ENCODE measurements at regions of chr9 and their contacts with region 1.

Region 1: DNA sequence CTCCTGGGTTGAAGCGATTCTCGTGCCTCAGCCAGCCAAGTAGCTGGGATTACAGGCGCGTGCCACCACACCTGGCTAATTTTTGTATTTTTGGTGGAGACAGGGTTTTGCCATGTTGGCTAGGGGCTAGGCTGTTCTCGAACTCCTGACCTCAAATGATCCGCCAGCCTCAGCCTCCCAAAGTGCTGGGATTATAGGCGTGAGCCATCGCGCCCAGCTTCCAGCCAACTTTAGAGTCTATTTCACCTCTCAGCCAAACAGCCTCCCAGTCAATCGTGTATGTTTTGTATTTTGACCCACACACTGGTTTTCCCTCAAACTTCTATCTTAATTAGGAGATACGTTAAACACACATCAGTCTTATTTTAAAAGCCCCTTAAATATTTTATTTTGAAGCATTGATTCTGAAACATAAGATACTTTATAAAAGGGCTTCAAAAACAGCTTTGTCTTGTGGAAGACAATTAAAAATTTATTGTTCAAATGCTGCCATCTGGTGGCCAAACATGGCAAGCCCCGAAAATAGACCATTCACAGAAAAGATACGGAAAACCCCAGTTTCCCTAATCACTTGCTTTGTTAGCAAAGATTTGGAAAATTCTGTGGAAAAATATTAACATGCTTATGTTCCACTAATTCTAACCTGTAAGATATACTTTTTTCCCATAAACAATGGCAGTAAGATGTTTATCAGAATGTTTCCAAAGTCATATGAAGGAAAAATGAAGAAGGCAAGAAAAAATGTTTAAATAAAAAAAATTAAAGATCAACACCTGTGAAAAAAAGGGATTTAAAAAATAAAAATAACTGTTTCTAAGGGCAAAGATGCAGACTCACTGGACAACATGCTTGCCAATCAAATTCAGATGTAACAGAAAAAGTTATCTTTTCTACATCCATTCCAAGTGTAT is 33.1 kb downstream of the APTX start:
- DNase-seq: peak; percentile 19
- H3K4me3 ChIP-seq: no peak overlapping the region
- H3K27ac ChIP-seq: no peak overlapping the region
- H3K4me1 ChIP-seq: no peaks in the 10 kb centered on the region
- H3K27me3 ChIP-seq: no peaks in the 10 kb centered on the region
- CTCF ChIP-seq: peak; percentile 77 to 79

Region 2: DNA sequence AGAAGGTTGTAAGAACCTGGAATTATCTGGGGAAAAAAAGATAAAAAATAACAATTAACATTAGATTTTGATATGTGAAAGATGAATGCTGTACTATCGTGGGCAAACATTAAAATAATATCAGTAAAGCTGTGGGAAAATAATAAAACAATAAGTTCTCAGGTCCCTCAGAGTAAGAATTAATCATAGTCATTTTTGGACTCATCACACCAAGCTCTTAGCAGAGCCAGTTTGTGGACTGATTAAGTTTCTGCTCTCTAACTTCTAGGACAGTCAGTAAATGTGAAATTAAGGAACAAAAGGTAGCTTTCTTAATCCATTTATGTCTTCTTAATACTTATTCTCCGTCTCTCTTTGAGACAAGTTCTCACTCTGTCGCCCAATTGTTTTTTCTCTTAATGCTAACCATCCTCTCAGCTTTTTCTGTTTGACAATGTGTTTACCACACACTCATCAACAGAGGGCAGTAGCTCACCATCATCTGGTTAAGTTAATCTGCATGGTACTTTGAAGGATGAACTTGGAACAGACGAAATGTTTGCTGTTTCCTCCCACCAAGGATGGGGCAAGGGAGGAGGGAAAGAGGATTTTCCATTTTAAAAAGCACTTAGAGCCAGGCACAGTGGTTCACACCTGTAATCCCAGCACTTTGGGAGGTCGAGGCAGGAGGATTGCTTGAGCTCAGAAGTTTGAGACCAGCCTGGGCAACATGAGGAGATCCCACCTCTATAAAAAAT is 589.2 kb before region 1 on chr9:
- CTCF ChIA-PET with region 1: no interaction called
- dilution Hi-C with region 1: loop called (anchors 25 kb)
- in situ Hi-C with region 1: loop called (anchors 10 to 25 kb)
- intact Hi-C with region 1: loop called (anchors 2 kb)
- DNase-seq: peak; percentile 68
- H3K4me3 ChIP-seq: no peak overlapping the region
- H3K27ac ChIP-seq: no peak overlapping the region
- H3K4me1 ChIP-seq: peaks cover 7% of the 10 kb centered on the region
- H3K27me3 ChIP-seq: no peaks in the 10 kb centered on the region
- CTCF ChIP-seq: peak; percentile 82 to 85

Region 3: DNA sequence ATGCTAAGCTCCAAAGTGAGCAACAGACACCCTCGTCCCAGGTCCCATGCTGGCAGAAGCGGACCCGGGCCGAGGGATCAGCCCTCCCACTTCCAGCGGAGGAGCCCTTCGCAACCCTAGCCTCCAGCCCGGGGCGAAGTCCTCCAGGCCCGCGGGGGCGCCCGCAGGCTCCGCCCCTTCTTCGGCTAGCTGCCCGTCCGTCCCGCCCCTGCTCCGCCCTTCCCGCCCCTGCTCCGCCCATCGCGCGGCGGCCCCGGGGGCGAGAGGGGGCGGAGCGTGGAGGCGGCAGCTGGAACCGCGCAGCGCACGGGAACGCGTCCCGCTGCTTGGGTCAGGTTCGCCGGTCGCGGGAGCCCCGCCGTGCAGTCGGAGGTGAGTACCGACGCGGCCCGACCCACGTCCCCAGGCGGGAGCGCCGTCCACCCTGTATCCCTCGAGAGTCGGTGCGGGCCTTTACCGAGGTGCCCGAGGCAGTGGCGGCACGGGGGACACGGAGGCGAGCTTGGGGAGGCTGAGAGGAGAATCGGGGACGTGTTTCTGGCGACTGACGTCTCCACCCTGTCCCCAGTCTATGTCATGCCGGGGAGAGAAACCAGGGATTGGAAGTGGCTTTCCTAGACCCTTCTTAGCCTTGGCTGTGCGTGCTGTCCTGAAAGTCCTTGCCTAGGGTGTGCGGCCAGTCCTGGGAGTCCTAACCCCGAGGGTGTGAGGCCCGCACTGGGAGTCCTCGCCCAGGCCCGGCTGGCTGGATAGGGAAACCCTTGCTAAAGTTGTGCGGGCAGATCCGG is 583.8 kb before region 1 on chr9 and contains the start of gene ACO1:
- CTCF ChIA-PET with region 1: no interaction called
- dilution Hi-C with region 1: loop called (anchors 25 kb)
- in situ Hi-C with region 1: loop called (anchors 10 to 25 kb)
- intact Hi-C with region 1: loop called (anchors 2 kb)
- DNase-seq: peak; percentile 83
- H3K4me3 ChIP-seq: peak within 1 kb of the TSS; percentile 79 to 98 (median 86)
- H3K27ac ChIP-seq: peak within 1 kb of the TSS; percentile 69
- H3K4me1 ChIP-seq: peaks cover 14% of the 10 kb centered on the region
- H3K27me3 ChIP-seq: no peaks in the 10 kb centered on the region
- CTCF ChIP-seq: no peak
- total RNA-seq, gene ACO1: 43.1 to 44.2 TPM

Region 4: DNA sequence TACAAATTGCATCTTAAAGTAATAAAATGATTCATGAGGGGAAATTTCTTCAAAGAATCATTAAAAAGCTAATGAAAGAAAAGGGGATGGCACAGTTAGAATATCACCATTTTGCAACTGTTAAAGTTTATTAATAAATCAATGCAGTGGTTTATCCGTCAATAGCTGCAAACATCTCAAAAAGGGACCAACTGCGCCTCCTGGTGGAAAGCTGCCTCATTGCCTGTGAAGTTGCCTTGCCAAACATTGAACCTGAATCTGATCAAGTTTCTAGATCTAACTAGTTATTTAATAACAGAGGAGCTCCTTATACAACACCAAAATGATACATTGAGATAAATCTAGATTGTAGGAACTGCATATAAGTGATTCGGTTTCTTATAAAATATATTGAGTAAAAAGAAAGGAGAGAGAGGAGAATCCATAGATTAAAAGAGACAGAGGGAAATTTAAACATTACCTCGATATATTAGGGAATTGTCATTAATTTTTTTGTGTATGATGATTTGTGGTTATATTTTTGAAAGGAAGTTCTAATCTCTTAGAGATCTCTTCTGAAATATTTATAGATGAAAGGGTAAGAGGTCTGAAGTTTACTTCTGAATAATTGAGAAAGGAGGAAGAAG is 388.5 kb before region 1 on chr9:
- CTCF ChIA-PET with region 1: interaction called, 4 read pairs
- dilution Hi-C with region 1: loop called (anchors 25 kb)
- in situ Hi-C with region 1: loop called in 1 of 2 experiments (anchors 10 kb)
- intact Hi-C with region 1: loop called (anchors 1 kb)
- DNase-seq: peak; percentile 25
- H3K4me3 ChIP-seq: no peak overlapping the region
- H3K27ac ChIP-seq: no peak overlapping the region
- H3K4me1 ChIP-seq: no peaks in the 10 kb centered on the region
- H3K27me3 ChIP-seq: no peaks in the 10 kb centered on the region
- CTCF ChIP-seq: peak; percentile 93 to 96

Region 5: DNA sequence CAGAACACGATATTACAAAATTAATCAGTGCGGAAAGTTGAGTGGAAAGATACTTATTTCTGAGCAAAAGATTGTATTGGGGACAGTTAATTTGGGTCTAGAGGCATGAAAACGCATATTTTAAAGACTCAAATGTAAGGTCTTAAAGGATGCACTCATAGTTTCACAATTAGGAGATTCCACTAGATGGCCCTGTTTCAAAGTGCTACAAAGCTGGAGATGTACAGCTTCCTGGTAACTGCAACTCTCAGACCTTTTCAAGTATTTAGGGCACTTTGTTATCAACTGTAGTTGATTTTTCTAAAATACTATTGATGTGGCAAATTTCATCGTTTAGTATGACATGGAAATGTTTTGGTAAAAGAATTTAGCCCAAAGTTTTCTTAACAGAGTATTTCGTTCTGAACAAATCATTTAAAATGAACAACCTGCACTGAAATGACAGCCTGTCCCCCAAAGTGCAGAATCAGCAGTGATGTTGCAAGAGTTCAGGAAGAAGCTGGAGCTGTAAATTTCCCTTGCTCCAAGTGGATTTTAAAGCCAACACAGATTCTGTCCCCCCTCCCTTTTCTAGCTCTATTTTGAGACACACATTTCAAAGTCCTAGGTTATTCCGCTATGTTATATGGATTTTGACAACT is 379.2 kb before region 1 on chr9:
- CTCF ChIA-PET with region 1: interaction called, 3 read pairs
- dilution Hi-C with region 1: loop called (anchors 25 kb)
- in situ Hi-C with region 1: loop called (anchors 5 kb)
- intact Hi-C with region 1: loop called (anchors 1 kb)
- DNase-seq: peak; percentile 35
- H3K4me3 ChIP-seq: no peak overlapping the region
- H3K27ac ChIP-seq: no peak overlapping the region
- H3K4me1 ChIP-seq: no peaks in the 10 kb centered on the region
- H3K27me3 ChIP-seq: no peaks in the 10 kb centered on the region
- CTCF ChIP-seq: peak; percentile 59 to 71

Region 6: DNA sequence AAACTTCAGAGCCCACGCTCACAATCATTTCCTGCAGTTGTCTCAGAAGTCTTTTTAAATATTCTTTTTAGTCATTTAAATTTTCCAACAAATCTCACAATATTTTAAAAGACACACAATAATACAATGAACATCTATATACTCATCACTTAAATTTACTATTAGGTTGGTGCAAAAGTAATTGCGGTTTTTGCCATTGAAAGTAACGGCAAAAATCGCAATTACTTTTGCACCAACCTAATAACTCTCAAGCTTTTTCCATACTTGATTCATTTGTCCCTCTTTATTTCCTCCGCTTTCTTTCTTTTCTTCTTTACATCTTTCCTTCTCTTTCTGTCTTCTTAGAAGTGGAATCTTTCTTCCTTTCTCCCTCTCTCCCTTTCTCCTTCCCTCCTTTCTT is 204.2 kb before region 1 on chr9:
- CTCF ChIA-PET with region 1: no interaction called
- dilution Hi-C with region 1: no loop called
- in situ Hi-C with region 1: no loop called
- intact Hi-C with region 1: loop called (anchors 2 kb)
- DNase-seq: no peak
- H3K4me3 ChIP-seq: no peak overlapping the region
- H3K27ac ChIP-seq: no peak overlapping the region
- H3K4me1 ChIP-seq: no peaks in the 10 kb centered on the region
- H3K27me3 ChIP-seq: no peaks in the 10 kb centered on the region
- CTCF ChIP-seq: no peak

Region 7: GRCh38 chr9:33714989-33715388 is 746.6 kb after region 1 on chr9:
- CTCF ChIA-PET with region 1: no interaction called
- dilution Hi-C with region 1: no loop called
- in situ Hi-C with region 1: no loop called
- intact Hi-C with region 1: no loop called
- DNase-seq: no peak
- H3K4me3 ChIP-seq: no peak overlapping the region
- H3K27ac ChIP-seq: no peak overlapping the region
- H3K4me1 ChIP-seq: no peaks in the 10 kb centered on the region
- H3K27me3 ChIP-seq: no peaks in the 10 kb centered on the region
- CTCF ChIP-seq: no peak

Measured in mammary epithelial cell (primary cell).